ENCODE measurements at regions of chr9 and their contacts with region 1.

Region 1: GRCh38 chr9:132169672-132170392 is 8.0 kb downstream of the NTNG2 start:
- DNase-seq: peak; percentile 13 to 74 (median 59)
- ATAC-seq: peak; percentile 64
- H3K4me3 ChIP-seq: no peak overlapping the region
- H3K4me3 Mint-ChIP-seq: no peak overlapping the region
- H3K27ac ChIP-seq: no peak overlapping the region
- H3K27ac Mint-ChIP-seq: no peak overlapping the region
- H3K4me1 ChIP-seq: no peaks in the 10 kb centered on the region
- H3K4me1 Mint-ChIP-seq: no peaks in the 10 kb centered on the region
- H3K27me3 ChIP-seq: no peaks in the 10 kb centered on the region
- H3K27me3 Mint-ChIP-seq: peaks cover 34% of the 10 kb centered on the region
- CTCF ChIP-seq: peak; percentile 77

Region 2: DNA sequence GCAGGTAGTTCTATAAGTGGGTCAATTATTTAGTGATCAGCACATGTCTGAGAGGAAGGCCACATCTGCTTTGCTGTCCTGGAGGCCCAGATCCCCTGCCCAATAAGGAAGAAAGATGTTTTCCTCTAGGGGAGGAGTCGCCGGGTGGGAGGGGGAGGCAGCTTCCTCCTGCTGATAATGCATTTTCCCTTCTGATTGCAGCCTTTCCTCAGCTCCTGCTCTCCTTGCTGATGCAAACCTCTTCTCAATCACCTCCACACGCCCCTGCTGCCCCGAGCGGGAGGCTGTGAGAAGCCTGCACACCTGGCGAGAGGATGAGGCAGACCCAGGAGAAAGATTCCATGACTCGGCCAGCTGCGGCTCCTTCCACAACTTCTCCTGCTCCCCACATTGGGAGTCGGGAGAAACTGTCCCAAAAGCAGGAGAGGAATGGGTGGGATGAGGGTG is 14.9 kb before region 1 on chr9:
- CTCF ChIA-PET with region 1: interaction called, 14 read pairs
- POLR2A ChIA-PET with region 1: no interaction called
- intact Hi-C with region 1: no loop called
- DNase-seq: no peak
- ATAC-seq: no peak
- H3K4me3 ChIP-seq: no peak overlapping the region
- H3K4me3 Mint-ChIP-seq: no peak overlapping the region
- H3K27ac ChIP-seq: no peak overlapping the region
- H3K27ac Mint-ChIP-seq: no peak overlapping the region
- H3K4me1 ChIP-seq: no peaks in the 10 kb centered on the region
- H3K4me1 Mint-ChIP-seq: no peaks in the 10 kb centered on the region
- H3K27me3 ChIP-seq: no peaks in the 10 kb centered on the region
- H3K27me3 Mint-ChIP-seq: peaks cover 18% of the 10 kb centered on the region
- CTCF ChIP-seq: no peak

Region 3: DNA sequence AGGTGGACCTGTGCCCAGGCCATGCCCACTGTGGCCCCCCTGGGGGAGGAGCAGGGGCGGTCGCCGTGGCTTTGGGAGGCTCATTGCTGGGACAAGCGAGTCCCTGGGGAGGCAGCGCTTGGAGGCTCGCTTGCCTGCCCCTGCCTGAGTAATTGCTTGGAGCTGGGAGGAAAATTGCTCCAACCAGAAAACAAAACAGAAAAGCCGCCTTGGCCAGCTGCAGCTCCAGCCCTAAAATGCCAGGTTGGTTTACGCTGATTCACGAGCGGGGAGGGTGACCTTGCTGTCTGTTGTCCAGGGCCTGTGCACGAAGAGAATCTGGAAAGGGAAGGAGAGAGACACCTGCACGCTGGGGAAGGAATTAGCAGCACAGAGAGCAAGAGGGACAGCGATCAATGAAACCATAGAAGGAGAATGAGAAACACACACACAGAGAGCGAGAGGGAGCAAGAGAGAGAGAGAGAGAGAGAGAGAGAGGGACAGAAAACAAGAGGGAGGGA is 17.3 kb after region 1 on chr9:
- CTCF ChIA-PET with region 1: no interaction called
- POLR2A ChIA-PET with region 1: no interaction called
- intact Hi-C with region 1: no loop called
- DNase-seq: no peak
- ATAC-seq: no peak
- H3K4me3 ChIP-seq: no peak overlapping the region
- H3K4me3 Mint-ChIP-seq: no peak overlapping the region
- H3K27ac ChIP-seq: no peak overlapping the region
- H3K27ac Mint-ChIP-seq: no peak overlapping the region
- H3K4me1 ChIP-seq: no peaks in the 10 kb centered on the region
- H3K4me1 Mint-ChIP-seq: no peaks in the 10 kb centered on the region
- H3K27me3 ChIP-seq: peaks cover 0 to 2% of the 10 kb centered on the region in 2 experiments
- H3K27me3 Mint-ChIP-seq: peaks cover 9% of the 10 kb centered on the region
- CTCF ChIP-seq: no peak